Activated CD4-positive, alpha-beta memory T cell treated with anti-CD3 and anti-CD28 coated beads for 36 hours (primary cell): ENCODE measurements at regions of chr14 and their contacts with region 1.

Region 1: GRCh38 chr14:94355191-94355797 is 32.2 kb upstream of the SERPINA6 start:
- DNase-seq: peak; percentile 51
- H3K4me3 Mint-ChIP-seq: no peak overlapping the region
- H3K27ac Mint-ChIP-seq: no peak overlapping the region
- H3K4me1 Mint-ChIP-seq: peaks cover 33% of the 10 kb centered on the region
- H3K27me3 Mint-ChIP-seq: peaks cover 9% of the 10 kb centered on the region

Region 2: DNA sequence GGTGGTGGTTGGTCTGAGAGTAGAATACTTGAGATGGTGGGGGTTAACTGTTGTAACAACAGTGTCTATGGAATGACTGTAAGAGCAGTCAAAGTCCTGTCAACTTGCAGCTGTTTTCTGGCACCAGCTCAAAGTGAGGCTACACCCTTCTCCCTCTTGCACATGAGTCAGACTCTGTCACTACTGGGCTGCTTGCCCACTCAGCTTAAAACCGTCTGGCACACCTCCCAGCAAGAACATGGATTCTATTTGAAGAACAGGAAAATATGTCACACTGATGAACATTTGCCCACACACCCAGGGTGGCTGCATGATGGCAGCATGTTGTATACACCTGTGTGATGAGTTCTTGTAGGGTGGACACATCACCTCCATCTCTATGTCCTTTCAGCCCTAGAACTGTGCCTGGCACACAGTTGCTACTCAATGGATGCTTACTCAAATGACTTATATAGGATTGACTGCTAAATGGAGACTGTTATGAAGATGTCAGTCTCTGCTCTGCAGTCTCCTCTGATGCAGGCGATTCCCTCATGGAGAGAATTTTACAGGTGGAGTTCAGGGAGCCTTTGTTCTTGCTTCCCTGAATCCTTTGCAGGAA is 12.9 kb before region 1 on chr14:
- CTCF ChIA-PET with region 1: no interaction called
- POLR2A ChIA-PET with region 1: interaction called, 4 read pairs
- intact Hi-C with region 1: loop called (anchors 1 kb)
- DNase-seq: peak; percentile 80
- H3K4me3 Mint-ChIP-seq: no peak overlapping the region
- H3K27ac Mint-ChIP-seq: peak overlapping the region; percentile 80
- H3K4me1 Mint-ChIP-seq: peaks cover 78% of the 10 kb centered on the region
- H3K27me3 Mint-ChIP-seq: no peaks in the 10 kb centered on the region

Region 3: GRCh38 chr14:94386085-94387031 is 31.1 kb after region 1 on chr14:
- CTCF ChIA-PET with region 1: no interaction called
- POLR2A ChIA-PET with region 1: no interaction called
- intact Hi-C with region 1: no loop called
- DNase-seq: no peak
- H3K4me3 Mint-ChIP-seq: no peak overlapping the region
- H3K27ac Mint-ChIP-seq: no peak overlapping the region
- H3K4me1 Mint-ChIP-seq: peaks cover 8% of the 10 kb centered on the region
- H3K27me3 Mint-ChIP-seq: no peaks in the 10 kb centered on the region

Region 4: GRCh38 chr14:94412671-94413638 is 57.7 kb after region 1 on chr14:
- CTCF ChIA-PET with region 1: no interaction called
- POLR2A ChIA-PET with region 1: no interaction called
- intact Hi-C with region 1: loop called (anchors 2 kb)
- DNase-seq: peak; percentile 25
- H3K4me3 Mint-ChIP-seq: no peak overlapping the region
- H3K27ac Mint-ChIP-seq: no peak overlapping the region
- H3K4me1 Mint-ChIP-seq: no peaks in the 10 kb centered on the region
- H3K27me3 Mint-ChIP-seq: peaks cover 7% of the 10 kb centered on the region